ENCODE measurements at regions of chr1 and their contacts with region 1.

Region 1: DNA sequence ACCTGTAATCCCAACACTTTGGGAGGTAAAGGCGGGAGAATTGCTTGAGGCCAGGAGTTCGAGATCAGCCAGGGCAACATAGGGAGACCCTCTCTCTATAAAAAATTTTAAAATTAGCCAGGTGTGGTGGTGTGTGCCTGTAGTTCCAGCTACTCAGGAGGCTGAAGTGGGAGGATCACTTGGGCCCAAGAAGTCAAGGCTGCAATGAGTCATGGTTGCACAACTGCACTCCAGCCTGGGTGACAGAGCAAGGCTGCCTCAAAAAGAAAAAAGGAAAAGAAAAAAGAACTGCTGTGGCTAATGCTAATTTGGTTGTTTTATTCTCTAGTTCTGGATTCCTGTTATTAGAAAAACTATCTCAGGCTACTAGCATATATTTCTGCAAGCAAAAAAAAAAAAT is 29.8 kb downstream of the DBT start:
- DNase-seq: no peak
- H3K4me3 ChIP-seq: no peak overlapping the region
- H3K27ac ChIP-seq: no peak overlapping the region
- H3K4me1 ChIP-seq: no peaks in the 10 kb centered on the region
- H3K27me3 ChIP-seq: no peaks in the 10 kb centered on the region
- CTCF ChIP-seq: no peak
- POLR2A ChIP-seq: no peak

Region 2: GRCh38 chr1:100132566-100133477 is 87.1 kb before region 1 on chr1 and contains the starts of genes SASS6 and TRMT13:
- CTCF ChIA-PET with region 1: no interaction called
- POLR2A ChIA-PET with region 1: no interaction called
- dilution Hi-C with region 1: no loop called
- intact Hi-C with region 1: no loop called
- DNase-seq: peak; percentile 97
- H3K4me3 ChIP-seq: peak within 1 kb of the TSS; percentile 61 to 99 (median 85)
- H3K27ac ChIP-seq: peak within 1 kb of the TSS; percentile 58
- H3K4me1 ChIP-seq: peaks cover 24% of the 10 kb centered on the region
- H3K27me3 ChIP-seq: no peaks in the 10 kb centered on the region
- CTCF ChIP-seq: no peak
- POLR2A ChIP-seq: peak; percentile 80
- total RNA-seq, gene SASS6: 6.5 and 7.3 TPM in 2 replicates
- total RNA-seq, gene TRMT13: 12.7 and 14.1 TPM in 2 replicates

Region 3: GRCh38 chr1:100164216-100164615 is 55.7 kb before region 1 on chr1:
- CTCF ChIA-PET with region 1: no interaction called
- POLR2A ChIA-PET with region 1: no interaction called
- dilution Hi-C with region 1: no loop called
- intact Hi-C with region 1: loop called (anchors 10 kb)
- DNase-seq: no peak
- H3K4me3 ChIP-seq: no peak overlapping the region
- H3K27ac ChIP-seq: no peak overlapping the region
- H3K4me1 ChIP-seq: no peaks in the 10 kb centered on the region
- H3K27me3 ChIP-seq: no peaks in the 10 kb centered on the region
- CTCF ChIP-seq: no peak
- POLR2A ChIP-seq: no peak

Region 4: GRCh38 chr1:100351095-100351891 is 131.4 kb after region 1 on chr1:
- CTCF ChIA-PET with region 1: no interaction called
- POLR2A ChIA-PET with region 1: no interaction called
- dilution Hi-C with region 1: no loop called
- intact Hi-C with region 1: no loop called
- DNase-seq: peak; percentile 96
- H3K4me3 ChIP-seq: peak overlapping the region; percentile 77 to 97 (median 84)
- H3K27ac ChIP-seq: peak overlapping the region; percentile 84
- H3K4me1 ChIP-seq: peaks cover 33% of the 10 kb centered on the region
- H3K27me3 ChIP-seq: no peaks in the 10 kb centered on the region
- CTCF ChIP-seq: peak; percentile 18 to 41
- POLR2A ChIP-seq: peak; percentile 89

Region 5: GRCh38 chr1:100989306-100990077 is 769.6 kb after region 1 on chr1:
- CTCF ChIA-PET with region 1: no interaction called
- POLR2A ChIA-PET with region 1: no interaction called
- dilution Hi-C with region 1: no loop called
- intact Hi-C with region 1: no loop called
- DNase-seq: peak; percentile 91
- H3K4me3 ChIP-seq: no peak overlapping the region
- H3K27ac ChIP-seq: peak overlapping the region; percentile 75
- H3K4me1 ChIP-seq: peaks cover 18% of the 10 kb centered on the region
- H3K27me3 ChIP-seq: no peaks in the 10 kb centered on the region
- CTCF ChIP-seq: no peak
- POLR2A ChIP-seq: no peak

Measured in endothelial cell of umbilical vein (primary cell).